ENCODE measurements at regions of chr10 and their contacts with region 1.

Region 1: DNA sequence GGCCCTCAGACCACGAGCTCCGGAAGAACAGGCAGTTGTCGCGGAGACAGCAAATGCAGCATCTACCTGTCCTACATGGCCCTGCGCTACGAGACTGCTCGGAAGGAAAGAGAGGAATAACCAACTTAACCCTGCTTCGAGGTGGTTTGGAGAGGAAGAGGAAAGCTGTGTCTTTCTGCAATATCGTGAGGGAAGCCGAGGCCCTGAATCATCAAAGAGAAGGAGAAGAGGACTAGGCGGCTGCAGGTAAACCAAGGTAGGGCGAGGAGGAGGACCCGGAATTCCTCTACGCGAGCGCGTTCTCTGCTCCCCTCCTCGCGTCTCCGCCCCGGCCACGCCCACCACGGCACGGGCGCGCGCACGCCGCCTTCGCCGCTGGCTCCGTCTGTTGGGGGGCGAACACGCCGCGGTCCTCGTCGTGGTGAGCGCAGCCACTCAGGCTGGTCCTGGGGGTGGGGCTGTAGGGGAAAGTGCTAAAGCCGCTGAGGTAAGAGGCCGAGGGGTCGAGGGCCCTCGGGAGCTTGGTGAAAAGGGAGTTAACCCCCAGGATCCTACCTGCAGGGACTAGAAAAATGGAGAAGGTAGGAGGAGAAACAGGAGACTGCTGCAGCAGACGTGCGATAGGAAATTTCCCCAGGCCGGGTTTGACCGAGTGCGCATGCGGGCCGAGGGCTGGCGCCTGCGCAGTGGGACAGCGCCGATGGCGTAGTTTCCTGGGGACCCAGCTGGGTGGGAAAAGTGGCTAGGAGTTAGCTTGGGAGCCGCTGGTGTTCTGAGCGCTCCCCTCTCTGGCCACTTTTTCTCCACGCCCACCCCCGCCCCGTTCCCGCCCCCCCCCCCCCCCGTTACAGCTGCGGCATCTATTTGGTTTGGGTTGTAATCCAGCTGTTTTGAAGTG is at the starts of genes ANAPC16 and ASCC1:
- DNase-seq: peak; percentile 96
- ATAC-seq: peak; percentile 77
- H3K4me3 Mint-ChIP-seq: peak within 1 kb of the TSS; percentile 91
- H3K27ac Mint-ChIP-seq: peak within 1 kb of the TSS; percentile 97
- H3K4me1 Mint-ChIP-seq: peaks cover 48% of the 10 kb centered on the region
- H3K27me3 Mint-ChIP-seq: no peaks in the 10 kb centered on the region
- total RNA-seq, gene ANAPC16: 90.2 to 123 TPM
- total RNA-seq, gene ASCC1: 67.8 to 68.9 TPM

Region 2: DNA sequence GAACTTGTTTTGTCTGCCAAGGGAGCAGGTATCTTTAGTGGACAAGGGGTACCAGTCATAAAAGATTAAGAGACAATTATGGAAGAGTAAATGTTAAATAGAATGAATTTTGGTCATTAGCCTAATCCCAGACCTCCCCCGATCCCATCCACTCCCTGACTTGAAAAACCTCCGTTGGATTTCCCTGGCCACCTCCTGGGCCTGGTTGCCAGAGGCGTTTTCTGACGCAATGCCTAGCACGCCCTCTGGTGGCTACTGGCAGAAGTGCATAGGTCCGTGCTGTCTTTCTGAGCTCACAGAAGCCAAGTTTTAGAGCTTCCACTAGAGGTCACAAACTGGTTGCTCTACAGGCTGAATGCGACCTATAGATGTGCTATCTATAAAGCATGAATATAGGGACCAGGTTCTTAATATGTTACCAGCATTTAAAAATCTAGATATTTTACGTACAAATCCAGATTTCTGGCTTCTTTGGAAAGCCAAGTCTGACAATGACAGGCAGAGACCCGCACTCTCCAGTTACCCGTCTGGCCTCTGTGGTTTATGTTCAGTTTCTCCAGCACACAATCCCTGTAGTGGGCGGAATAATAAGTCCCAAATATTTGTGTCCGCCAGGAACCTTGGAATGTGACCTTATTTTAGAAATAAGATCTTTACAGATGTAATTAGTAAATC is 167.3 kb before region 1 on chr10:
- CTCF ChIA-PET with region 1: interaction called, 14 read pairs
- POLR2A ChIA-PET with region 1: no interaction called
- intact Hi-C with region 1: no loop called
- DNase-seq: peak; percentile 96
- ATAC-seq: peak; percentile 97
- H3K4me3 Mint-ChIP-seq: no peak overlapping the region
- H3K27ac Mint-ChIP-seq: peak overlapping the region; percentile 28
- H3K4me1 Mint-ChIP-seq: peaks cover 14% of the 10 kb centered on the region
- H3K27me3 Mint-ChIP-seq: no peaks in the 10 kb centered on the region

Region 3: GRCh38 chr10:72260588-72261322 is 44.9 kb after region 1 on chr10:
- CTCF ChIA-PET with region 1: interaction called, 4 read pairs
- POLR2A ChIA-PET with region 1: no interaction called
- intact Hi-C with region 1: loop called (anchors 1 kb)
- DNase-seq: peak; percentile 97
- ATAC-seq: peak; percentile 75
- H3K4me3 Mint-ChIP-seq: peak overlapping the region; percentile 78
- H3K27ac Mint-ChIP-seq: peak overlapping the region; percentile 97
- H3K4me1 Mint-ChIP-seq: peaks cover 70% of the 10 kb centered on the region
- H3K27me3 Mint-ChIP-seq: no peaks in the 10 kb centered on the region

Region 4: GRCh38 chr10:72297968-72298773 is 82.3 kb after region 1 on chr10:
- CTCF ChIA-PET with region 1: interaction called, 6 read pairs
- POLR2A ChIA-PET with region 1: interaction called, 14 read pairs
- intact Hi-C with region 1: loop called (anchors 1 to 2 kb)
- DNase-seq: peak; percentile 98
- ATAC-seq: peak; percentile 72
- H3K4me3 Mint-ChIP-seq: peak overlapping the region; percentile 80
- H3K27ac Mint-ChIP-seq: peak overlapping the region; percentile 99
- H3K4me1 Mint-ChIP-seq: peaks cover 68% of the 10 kb centered on the region
- H3K27me3 Mint-ChIP-seq: no peaks in the 10 kb centered on the region

Region 5: GRCh38 chr10:72309290-72310240 is 93.7 kb after region 1 on chr10:
- CTCF ChIA-PET with region 1: no interaction called
- POLR2A ChIA-PET with region 1: no interaction called
- intact Hi-C with region 1: no loop called
- DNase-seq: peak; percentile 57
- ATAC-seq: no peak
- H3K4me3 Mint-ChIP-seq: peak overlapping the region; percentile 26
- H3K27ac Mint-ChIP-seq: peak overlapping the region; percentile 89
- H3K4me1 Mint-ChIP-seq: peaks cover 71% of the 10 kb centered on the region
- H3K27me3 Mint-ChIP-seq: no peaks in the 10 kb centered on the region

Region 6: DNA sequence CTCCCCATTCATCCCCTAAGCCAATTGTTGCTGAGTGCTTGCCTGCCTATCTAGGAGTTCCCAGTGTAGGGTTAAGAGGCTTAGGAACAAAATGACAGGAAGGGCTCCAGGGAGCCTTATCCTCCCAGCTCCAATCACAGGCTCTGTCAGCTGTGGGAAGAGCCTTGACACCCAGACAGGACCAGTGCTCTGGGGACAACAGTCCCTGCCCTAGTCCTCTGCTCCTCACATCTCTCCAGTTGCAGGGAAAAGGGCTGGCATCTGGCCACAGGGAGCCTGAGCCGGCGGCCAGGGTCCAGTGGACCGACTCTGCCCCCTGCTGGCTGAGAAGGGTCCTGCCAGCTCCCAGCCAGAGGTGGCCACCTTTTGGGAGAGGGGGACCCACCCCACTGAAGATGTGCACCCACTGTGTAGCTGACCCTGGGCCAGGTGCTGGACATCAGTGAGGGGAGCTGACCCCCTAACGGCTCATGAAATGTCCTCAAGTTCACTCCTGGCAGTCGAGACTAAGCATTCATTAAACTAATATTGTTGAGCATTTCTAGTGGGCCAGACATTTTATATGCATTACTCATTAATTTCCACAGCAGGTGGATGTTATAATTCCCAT is 121.2 kb after region 1 on chr10:
- CTCF ChIA-PET with region 1: interaction called, 13 read pairs
- POLR2A ChIA-PET with region 1: interaction called, 11 read pairs
- intact Hi-C with region 1: loop called (anchors 1 to 2 kb)
- DNase-seq: peak; percentile 84
- ATAC-seq: peak; percentile 8
- H3K4me3 Mint-ChIP-seq: peak overlapping the region; percentile 24
- H3K27ac Mint-ChIP-seq: peak overlapping the region; percentile 95
- H3K4me1 Mint-ChIP-seq: peaks cover 63% of the 10 kb centered on the region
- H3K27me3 Mint-ChIP-seq: no peaks in the 10 kb centered on the region

Region 7: DNA sequence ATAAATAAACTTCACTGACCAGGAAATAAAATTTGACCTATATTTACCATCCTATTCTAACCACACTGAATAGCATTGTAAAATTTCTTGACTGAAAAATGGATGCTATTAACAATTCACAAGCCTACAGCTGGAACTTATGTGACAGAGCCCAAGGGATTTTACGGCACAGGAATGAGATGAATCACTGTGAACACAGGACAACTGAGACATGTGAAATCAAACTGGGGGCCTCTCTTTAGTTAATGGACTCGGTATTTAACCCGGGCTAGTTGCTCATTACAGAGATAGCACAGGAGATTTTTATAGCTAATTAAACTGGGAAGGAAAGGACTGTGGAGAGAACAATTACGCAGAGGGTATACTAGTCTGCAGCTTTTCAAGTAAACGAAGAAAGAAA is 309.4 kb after region 1 on chr10:
- CTCF ChIA-PET with region 1: no interaction called
- POLR2A ChIA-PET with region 1: no interaction called
- intact Hi-C with region 1: no loop called
- DNase-seq: no peak
- ATAC-seq: no peak
- H3K4me3 Mint-ChIP-seq: no peak overlapping the region
- H3K27ac Mint-ChIP-seq: no peak overlapping the region
- H3K4me1 Mint-ChIP-seq: no peaks in the 10 kb centered on the region
- H3K27me3 Mint-ChIP-seq: no peaks in the 10 kb centered on the region

Region 8: GRCh38 chr10:72692057-72692910 is 476.4 kb after region 1 on chr10 and contains the start of gene MCU:
- CTCF ChIA-PET with region 1: no interaction called
- POLR2A ChIA-PET with region 1: interaction called, 4 read pairs
- intact Hi-C with region 1: loop called in 1 of 2 experiments (anchors 5 kb)
- DNase-seq: peak; percentile 96
- ATAC-seq: peak; percentile 98
- H3K4me3 Mint-ChIP-seq: peak within 1 kb of the TSS; percentile 77
- H3K27ac Mint-ChIP-seq: peak within 1 kb of the TSS; percentile 75
- H3K4me1 Mint-ChIP-seq: peaks cover 40% of the 10 kb centered on the region
- H3K27me3 Mint-ChIP-seq: no peaks in the 10 kb centered on the region
- total RNA-seq, gene MCU: 15.1 to 16.0 TPM